PC-9 (cell line): ENCODE measurements at regions of chr19 and their contacts with region 1.

Region 1: DNA sequence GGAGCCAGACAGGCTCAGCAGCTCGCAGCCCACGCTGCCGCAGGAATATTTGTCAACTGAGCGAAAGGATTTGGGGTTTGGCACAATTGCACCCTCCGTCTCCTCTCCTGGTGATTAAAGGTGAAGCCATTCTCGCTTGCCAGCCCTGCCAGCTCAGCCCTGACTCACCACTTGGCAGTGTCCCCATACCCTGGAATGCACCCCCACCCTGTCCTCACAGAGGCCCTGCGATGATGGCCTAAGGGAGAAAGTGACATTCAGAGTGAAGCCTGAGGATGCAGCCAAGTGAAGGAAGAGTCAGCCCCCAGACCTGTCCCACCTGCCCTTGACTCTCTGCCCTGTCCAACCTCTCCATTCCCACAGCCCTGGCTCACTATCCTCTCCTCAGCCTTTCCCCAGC is 18.8 kb downstream of the CYTH2 start:
- DNase-seq: peak; percentile 97
- H3K4me3 ChIP-seq: peak overlapping the region; percentile 25; the same call in 1 of the 2 replicates
- H3K27ac ChIP-seq: peak overlapping the region; percentile 88
- H3K4me1 ChIP-seq: peaks cover 51% of the 10 kb centered on the region
- H3K27me3 ChIP-seq: no peaks in the 10 kb centered on the region
- CTCF ChIP-seq: no peak

Region 2: DNA sequence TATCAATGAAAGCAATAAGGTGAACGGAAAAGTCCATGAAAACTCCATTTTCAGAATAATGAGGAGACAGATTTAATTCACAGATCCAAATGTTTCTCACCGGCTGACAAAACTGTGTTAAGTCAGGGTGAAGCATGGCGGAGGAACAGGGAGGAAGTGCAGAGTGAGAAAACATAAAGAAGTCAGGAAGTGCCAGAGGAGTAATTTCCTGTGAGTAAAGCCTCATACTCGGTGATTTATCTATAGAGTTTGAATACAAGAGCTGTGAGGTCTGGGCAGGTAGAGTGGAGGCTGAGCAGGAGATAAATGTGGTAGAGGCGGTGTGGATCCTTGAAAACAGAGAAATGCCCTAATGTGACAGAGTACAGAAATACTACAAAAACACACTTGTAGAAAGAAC is 243.7 kb before region 1 on chr19:
- CTCF ChIA-PET with region 1: no interaction called
- POLR2A ChIA-PET with region 1: no interaction called
- intact Hi-C with region 1: no loop called
- DNase-seq: no peak
- H3K4me3 ChIP-seq: no peak overlapping the region
- H3K27ac ChIP-seq: no peak overlapping the region
- H3K4me1 ChIP-seq: peaks cover 7% of the 10 kb centered on the region
- H3K27me3 ChIP-seq: no peaks in the 10 kb centered on the region
- CTCF ChIP-seq: no peak

Region 3: GRCh38 chr19:48391107-48391986 is 96.6 kb before region 1 on chr19 and contains the start of gene KDELR1:
- CTCF ChIA-PET with region 1: interaction called, 17 read pairs
- POLR2A ChIA-PET with region 1: interaction called, 17 read pairs
- intact Hi-C with region 1: loop called (anchors 5 kb)
- DNase-seq: peak in 1 of 2 experiments; percentile 82
- H3K4me3 ChIP-seq: peak within 1 kb of the TSS; percentile 91
- H3K27ac ChIP-seq: peak within 1 kb of the TSS; percentile 58
- H3K4me1 ChIP-seq: no peaks in the 10 kb centered on the region
- H3K27me3 ChIP-seq: peaks cover 11% of the 10 kb centered on the region
- CTCF ChIP-seq: peak; percentile 95
- total RNA-seq, gene KDELR1: 220 and 261 TPM in 2 replicates

Region 4: GRCh38 chr19:48421548-48421947 is 66.4 kb before region 1 on chr19:
- CTCF ChIA-PET with region 1: no interaction called
- POLR2A ChIA-PET with region 1: no interaction called
- intact Hi-C with region 1: no loop called
- DNase-seq: no peak
- H3K4me3 ChIP-seq: no peak overlapping the region
- H3K27ac ChIP-seq: no peak overlapping the region
- H3K4me1 ChIP-seq: peaks cover 7% of the 10 kb centered on the region; the same call in 1 of the 2 replicates
- H3K27me3 ChIP-seq: no peaks in the 10 kb centered on the region
- CTCF ChIP-seq: no peak

Region 5: GRCh38 chr19:48468775-48469288 is 19.2 kb before region 1 on chr19:
- CTCF ChIA-PET with region 1: interaction called, 19 read pairs
- POLR2A ChIA-PET with region 1: no interaction called
- intact Hi-C with region 1: loop called (anchors 2 kb)
- DNase-seq: peak; percentile 100
- H3K4me3 ChIP-seq: peak overlapping the region; percentile 93
- H3K27ac ChIP-seq: peak overlapping the region; percentile 82; the same call in 1 of the 2 replicates
- H3K4me1 ChIP-seq: peaks cover 11% of the 10 kb centered on the region
- H3K27me3 ChIP-seq: no peaks in the 10 kb centered on the region
- CTCF ChIP-seq: no peak

Region 6: DNA sequence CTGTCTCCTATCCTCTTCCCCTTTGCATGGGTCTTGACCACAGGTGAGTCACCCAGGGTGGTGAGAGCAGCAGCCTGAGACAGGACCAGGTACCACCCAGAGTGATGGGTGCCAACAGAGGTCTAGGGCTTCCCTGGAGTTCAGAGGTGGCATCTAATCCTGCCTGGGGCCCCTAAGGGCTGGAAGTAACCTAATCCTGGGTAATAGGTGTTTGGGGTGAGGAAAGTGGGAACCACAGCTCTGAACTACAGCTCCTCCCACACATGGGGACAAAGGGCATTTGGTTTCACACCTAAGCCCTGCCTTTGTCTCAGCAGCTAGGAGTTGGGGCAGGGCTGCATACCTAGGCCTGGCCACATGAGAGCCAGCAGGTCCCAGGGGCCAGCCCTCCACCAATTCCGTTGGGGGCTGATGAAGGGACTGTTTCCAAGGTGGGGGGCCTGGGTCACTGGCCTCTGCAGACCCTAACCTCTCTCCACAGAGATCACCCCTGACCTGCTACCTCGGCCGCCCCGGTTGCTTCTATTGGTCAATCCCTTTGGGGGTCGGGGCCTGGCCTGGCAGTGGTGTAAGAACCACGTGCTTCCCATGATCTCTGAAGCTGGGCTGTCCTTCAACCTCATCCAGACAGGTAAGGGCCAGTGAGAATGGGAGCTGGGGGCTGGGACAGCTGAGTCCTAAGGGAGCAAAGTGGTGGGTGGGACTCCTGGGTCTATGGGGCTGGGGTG is 139.4 kb after region 1 on chr19:
- CTCF ChIA-PET with region 1: interaction called, 11 read pairs
- POLR2A ChIA-PET with region 1: no interaction called
- intact Hi-C with region 1: no loop called
- DNase-seq: peak; percentile 83 to 92
- H3K4me3 ChIP-seq: no peak overlapping the region
- H3K27ac ChIP-seq: peak overlapping the region; percentile 81
- H3K4me1 ChIP-seq: peaks cover 25% of the 10 kb centered on the region
- H3K27me3 ChIP-seq: no peaks in the 10 kb centered on the region
- CTCF ChIP-seq: no peak

Region 7: GRCh38 chr19:49528211-49528771 is 1040.3 kb after region 1 on chr19:
- CTCF ChIA-PET with region 1: no interaction called
- POLR2A ChIA-PET with region 1: interaction called, 12 read pairs
- intact Hi-C with region 1: no loop called
- DNase-seq: no peak
- H3K4me3 ChIP-seq: peak overlapping the region; percentile 62; the same call in 1 of the 2 replicates
- H3K27ac ChIP-seq: no peak overlapping the region
- H3K4me1 ChIP-seq: no peaks in the 10 kb centered on the region; the same call in 1 of the 2 replicates
- H3K27me3 ChIP-seq: peaks cover 27% of the 10 kb centered on the region
- CTCF ChIP-seq: no peak